ENCODE measurements at regions of chr3 and their contacts with region 1.

Region 1: GRCh38 chr3:46998121-46998851 is 18.8 kb downstream of the NBEAL2 start:
- DNase-seq: peak; percentile 53 to 84 (median 69)
- ATAC-seq: peak; percentile 85
- H3K4me3 ChIP-seq: no peak overlapping the region
- H3K4me3 Mint-ChIP-seq: no peak overlapping the region
- H3K27ac ChIP-seq: no peak overlapping the region
- H3K27ac Mint-ChIP-seq: peak overlapping the region in 5 of 9 donors; percentile 41 to 79 (median 55)
- H3K4me1 ChIP-seq: peaks cover 0 to 10% of the 10 kb centered on the region in 2 donors
- H3K4me1 Mint-ChIP-seq: peaks cover 7 to 18% (median 11%) of the 10 kb centered on the region in 7 donors
- H3K27me3 ChIP-seq: no peaks in the 10 kb centered on the region
- H3K27me3 Mint-ChIP-seq: no peaks in the 10 kb centered on the region

Region 2: DNA sequence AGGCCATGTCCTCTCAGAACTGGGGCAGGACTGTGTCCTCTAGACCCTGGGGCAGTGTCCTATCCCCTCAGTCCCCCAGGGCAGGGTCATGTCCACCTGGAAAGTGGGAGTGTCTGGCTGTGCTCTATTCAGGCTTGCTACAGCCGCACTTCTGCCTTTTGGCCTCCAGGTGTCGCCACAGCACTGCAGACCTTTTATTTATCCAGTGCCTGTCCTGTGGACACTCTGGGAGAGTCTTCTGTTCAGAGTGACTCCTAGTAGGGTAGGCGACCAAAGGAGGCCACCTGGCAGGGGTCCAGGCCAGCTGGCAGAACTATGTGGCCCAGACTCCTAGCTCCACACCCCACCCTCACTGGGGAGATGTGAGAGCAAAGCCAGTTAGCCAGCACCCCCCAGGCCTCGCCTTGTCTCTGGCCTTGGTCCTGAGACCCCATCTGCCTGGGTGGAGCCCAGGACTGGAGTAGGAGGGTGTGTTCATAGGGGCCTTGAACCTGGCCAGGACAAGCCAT is 293.2 kb before region 1 on chr3:
- CTCF ChIA-PET with region 1: interaction called, 4 read pairs
- POLR2A ChIA-PET with region 1: no interaction called
- intact Hi-C with region 1: loop called in 1 of 2 experiments (anchors 1 kb)
- DNase-seq: peak; percentile 45 to 71 (median 63)
- ATAC-seq: peak; percentile 87
- H3K4me3 ChIP-seq: no peak overlapping the region
- H3K4me3 Mint-ChIP-seq: no peak overlapping the region
- H3K27ac ChIP-seq: no peak overlapping the region
- H3K27ac Mint-ChIP-seq: peak overlapping the region in 1 of 9 donors; percentile 36
- H3K4me1 ChIP-seq: peaks cover 0 to 19% of the 10 kb centered on the region in 2 donors
- H3K4me1 Mint-ChIP-seq: peaks cover 0 to 29% (median 20%) of the 10 kb centered on the region in 7 donors
- H3K27me3 ChIP-seq: no peaks in the 10 kb centered on the region
- H3K27me3 Mint-ChIP-seq: peaks cover 0 to 25% (median 0%) of the 10 kb centered on the region in 5 donors

Region 3: DNA sequence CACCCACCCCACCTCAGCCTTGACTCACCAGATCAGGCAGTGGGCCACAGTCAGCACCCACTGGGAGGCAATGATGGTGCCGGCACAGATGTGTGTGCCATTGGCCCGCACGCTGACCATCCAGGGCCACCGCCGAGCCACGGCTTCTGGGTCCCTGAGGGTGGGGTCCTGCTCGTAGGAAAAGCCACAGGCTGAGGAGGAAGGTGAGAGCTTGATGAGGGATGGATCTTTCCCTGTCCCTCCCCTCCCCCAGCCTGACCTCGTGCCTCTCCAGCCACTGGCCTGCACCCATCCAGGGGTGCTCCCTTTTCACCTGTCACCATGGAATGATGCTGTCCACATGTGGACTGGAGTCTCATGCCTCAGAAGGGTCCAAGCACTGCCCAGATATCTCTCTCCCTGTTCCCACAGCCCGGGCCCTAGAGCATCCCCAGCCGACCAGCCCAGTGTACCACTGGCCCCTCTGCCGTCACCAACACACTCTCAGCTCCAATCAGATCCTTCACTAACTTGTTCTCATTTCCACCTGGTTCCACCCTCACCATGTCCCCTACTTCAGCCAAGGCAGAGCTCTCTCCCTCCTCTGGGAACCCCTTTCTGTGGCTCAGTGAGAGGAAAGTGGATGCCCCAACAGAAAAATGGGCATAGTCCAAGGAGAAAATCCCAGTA is 282.6 kb before region 1 on chr3:
- CTCF ChIA-PET with region 1: no interaction called
- POLR2A ChIA-PET with region 1: no interaction called
- intact Hi-C with region 1: no loop called
- DNase-seq: no peak
- ATAC-seq: no peak
- H3K4me3 ChIP-seq: no peak overlapping the region
- H3K4me3 Mint-ChIP-seq: no peak overlapping the region
- H3K27ac ChIP-seq: no peak overlapping the region
- H3K27ac Mint-ChIP-seq: peak overlapping the region in 1 of 9 donors; percentile 41
- H3K4me1 ChIP-seq: no peaks in the 10 kb centered on the region
- H3K4me1 Mint-ChIP-seq: peaks cover 0 to 6% (median 0%) of the 10 kb centered on the region in 7 donors
- H3K27me3 ChIP-seq: no peaks in the 10 kb centered on the region
- H3K27me3 Mint-ChIP-seq: peaks cover 0 to 12% (median 8%) of the 10 kb centered on the region in 5 donors

Region 4: GRCh38 chr3:46895204-46895660 is 103.1 kb before region 1 on chr3:
- CTCF ChIA-PET with region 1: interaction called, 3 read pairs
- POLR2A ChIA-PET with region 1: no interaction called
- intact Hi-C with region 1: loop called in 1 of 2 experiments (anchors 1 kb)
- DNase-seq: peak; percentile 60 to 83 (median 74)
- ATAC-seq: peak; percentile 84
- H3K4me3 ChIP-seq: no peak overlapping the region
- H3K4me3 Mint-ChIP-seq: peak overlapping the region in 1 of 10 donors; percentile 22
- H3K27ac ChIP-seq: no peak overlapping the region
- H3K27ac Mint-ChIP-seq: peak overlapping the region in 1 of 9 donors; percentile 69
- H3K4me1 ChIP-seq: no peaks in the 10 kb centered on the region
- H3K4me1 Mint-ChIP-seq: peaks cover 0 to 10% (median 6%) of the 10 kb centered on the region in 7 donors
- H3K27me3 ChIP-seq: peaks cover 0 to 5% of the 10 kb centered on the region in 2 donors
- H3K27me3 Mint-ChIP-seq: peaks cover 39 to 72% (median 57%) of the 10 kb centered on the region in 5 donors

Region 5: DNA sequence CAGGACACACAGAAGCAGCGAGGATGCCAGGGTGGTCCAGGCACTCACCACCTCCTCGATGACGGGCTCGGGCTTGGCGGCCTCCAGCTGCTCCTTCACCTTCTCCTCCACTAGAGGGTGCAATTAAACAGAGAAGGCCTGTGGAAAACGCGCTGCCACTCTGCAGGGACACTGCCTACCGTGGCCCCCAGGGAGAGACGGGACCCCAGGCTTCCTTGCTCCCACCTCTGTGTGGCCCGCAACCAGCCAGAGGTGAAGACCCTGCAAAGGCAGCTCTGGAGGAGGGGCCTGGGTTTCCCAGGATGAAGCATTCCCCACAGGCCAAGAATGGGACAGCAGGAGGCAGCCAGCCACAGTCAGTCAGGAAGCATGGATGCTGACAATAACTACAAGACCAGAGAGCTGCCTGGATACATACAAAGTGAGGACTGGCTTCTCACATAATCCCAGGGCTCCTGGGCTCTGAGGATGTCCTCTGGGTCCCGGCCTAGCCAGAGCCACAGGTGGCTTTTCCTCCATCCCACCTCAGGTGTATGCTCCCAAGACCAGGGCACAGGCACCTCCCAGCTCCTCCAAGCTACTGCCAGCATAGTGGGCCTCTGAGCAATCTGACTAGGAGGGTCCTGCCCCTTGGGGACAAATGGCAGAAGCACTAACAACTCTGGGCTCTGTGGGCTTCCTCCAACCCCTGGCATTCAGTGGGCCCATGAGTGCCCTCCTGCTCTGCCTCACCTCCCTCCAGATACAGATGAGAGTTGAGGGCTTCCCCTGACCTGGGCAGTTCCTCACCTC is 74.5 kb before region 1 on chr3:
- CTCF ChIA-PET with region 1: interaction called, 15 read pairs
- POLR2A ChIA-PET with region 1: no interaction called
- intact Hi-C with region 1: loop called (anchors 1 kb)
- DNase-seq: peak in 6 of 9 donors; percentile 18 to 52 (median 44)
- ATAC-seq: peak; percentile 61
- H3K4me3 ChIP-seq: no peak overlapping the region
- H3K4me3 Mint-ChIP-seq: no peak overlapping the region
- H3K27ac ChIP-seq: no peak overlapping the region
- H3K27ac Mint-ChIP-seq: peak overlapping the region in 5 of 9 donors; percentile 31 to 54 (median 43)
- H3K4me1 ChIP-seq: peaks cover 19 to 30% of the 10 kb centered on the region in 2 donors
- H3K4me1 Mint-ChIP-seq: peaks cover 13 to 40% (median 28%) of the 10 kb centered on the region in 7 donors
- H3K27me3 ChIP-seq: no peaks in the 10 kb centered on the region
- H3K27me3 Mint-ChIP-seq: no peaks in the 10 kb centered on the region

Region 6: DNA sequence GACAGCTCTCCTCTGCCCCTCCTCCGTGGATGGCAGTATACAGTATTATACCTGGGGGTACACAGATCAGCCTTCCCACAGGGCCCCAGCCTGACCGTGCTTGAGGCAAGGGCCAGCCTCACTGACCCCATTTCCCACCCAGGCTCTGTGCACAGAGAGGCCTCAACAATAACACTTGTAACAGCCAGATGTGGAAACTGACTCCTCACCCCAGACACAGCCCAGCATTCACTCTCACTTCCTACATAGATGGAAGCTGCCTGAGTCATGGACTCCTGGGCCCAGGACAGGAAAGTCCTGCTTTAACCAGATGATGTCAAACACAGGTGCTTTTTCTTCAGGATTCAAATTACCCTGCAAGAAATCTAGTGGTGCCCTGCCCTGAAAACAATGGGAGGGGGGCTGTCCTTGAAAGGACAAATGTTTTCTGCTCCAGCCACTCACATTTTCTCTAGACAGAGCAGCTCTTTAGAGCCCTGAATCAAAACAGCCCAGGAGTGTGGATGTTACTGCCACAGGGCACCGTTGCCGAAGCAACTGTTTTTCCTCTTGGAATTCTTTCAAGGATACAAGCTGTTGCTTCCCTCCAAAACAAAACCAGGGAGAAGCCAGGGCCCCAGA is 38.1 kb before region 1 on chr3:
- CTCF ChIA-PET with region 1: no interaction called
- POLR2A ChIA-PET with region 1: no interaction called
- intact Hi-C with region 1: no loop called
- DNase-seq: no peak
- ATAC-seq: peak; percentile 36
- H3K4me3 ChIP-seq: no peak overlapping the region
- H3K4me3 Mint-ChIP-seq: peak overlapping the region in 8 of 10 donors; percentile 4 to 58 (median 33)
- H3K27ac ChIP-seq: no peak overlapping the region
- H3K27ac Mint-ChIP-seq: peak overlapping the region; percentile 0 to 85 (median 61)
- H3K4me1 ChIP-seq: peaks cover 42 to 69% of the 10 kb centered on the region in 2 donors
- H3K4me1 Mint-ChIP-seq: peaks cover 48 to 87% (median 75%) of the 10 kb centered on the region in 7 donors
- H3K27me3 ChIP-seq: no peaks in the 10 kb centered on the region
- H3K27me3 Mint-ChIP-seq: no peaks in the 10 kb centered on the region

Region 7: GRCh38 chr3:46987743-46988401 is 10.4 kb before region 1 on chr3:
- CTCF ChIA-PET with region 1: interaction called, 5 read pairs
- POLR2A ChIA-PET with region 1: interaction called, 3 read pairs
- intact Hi-C with region 1: loop called in 1 of 2 experiments (anchors 1 kb)
- DNase-seq: peak; percentile 75 to 90 (median 86)
- ATAC-seq: peak; percentile 98
- H3K4me3 ChIP-seq: peak overlapping the region; percentile 43
- H3K4me3 Mint-ChIP-seq: peak overlapping the region; percentile 60 to 91 (median 78)
- H3K27ac ChIP-seq: peak overlapping the region; percentile 38
- H3K27ac Mint-ChIP-seq: peak overlapping the region; percentile 84 to 91 (median 88)
- H3K4me1 ChIP-seq: peaks cover 50 to 55% of the 10 kb centered on the region in 2 donors
- H3K4me1 Mint-ChIP-seq: peaks cover 51 to 79% (median 71%) of the 10 kb centered on the region in 7 donors
- H3K27me3 ChIP-seq: no peaks in the 10 kb centered on the region
- H3K27me3 Mint-ChIP-seq: no peaks in the 10 kb centered on the region

Region 8: GRCh38 chr3:47073685-47074084 is 75.4 kb after region 1 on chr3:
- CTCF ChIA-PET with region 1: no interaction called
- POLR2A ChIA-PET with region 1: no interaction called
- intact Hi-C with region 1: no loop called
- DNase-seq: no peak
- ATAC-seq: no peak
- H3K4me3 ChIP-seq: no peak overlapping the region
- H3K4me3 Mint-ChIP-seq: no peak overlapping the region
- H3K27ac ChIP-seq: no peak overlapping the region
- H3K27ac Mint-ChIP-seq: peak overlapping the region in 1 of 9 donors; percentile 34
- H3K4me1 ChIP-seq: no peaks in the 10 kb centered on the region
- H3K4me1 Mint-ChIP-seq: peaks cover 7 to 52% (median 33%) of the 10 kb centered on the region in 7 donors
- H3K27me3 ChIP-seq: no peaks in the 10 kb centered on the region
- H3K27me3 Mint-ChIP-seq: no peaks in the 10 kb centered on the region